A549 (cell line): ENCODE measurements at regions of chr19 and their contacts with region 1.

Region 1: DNA sequence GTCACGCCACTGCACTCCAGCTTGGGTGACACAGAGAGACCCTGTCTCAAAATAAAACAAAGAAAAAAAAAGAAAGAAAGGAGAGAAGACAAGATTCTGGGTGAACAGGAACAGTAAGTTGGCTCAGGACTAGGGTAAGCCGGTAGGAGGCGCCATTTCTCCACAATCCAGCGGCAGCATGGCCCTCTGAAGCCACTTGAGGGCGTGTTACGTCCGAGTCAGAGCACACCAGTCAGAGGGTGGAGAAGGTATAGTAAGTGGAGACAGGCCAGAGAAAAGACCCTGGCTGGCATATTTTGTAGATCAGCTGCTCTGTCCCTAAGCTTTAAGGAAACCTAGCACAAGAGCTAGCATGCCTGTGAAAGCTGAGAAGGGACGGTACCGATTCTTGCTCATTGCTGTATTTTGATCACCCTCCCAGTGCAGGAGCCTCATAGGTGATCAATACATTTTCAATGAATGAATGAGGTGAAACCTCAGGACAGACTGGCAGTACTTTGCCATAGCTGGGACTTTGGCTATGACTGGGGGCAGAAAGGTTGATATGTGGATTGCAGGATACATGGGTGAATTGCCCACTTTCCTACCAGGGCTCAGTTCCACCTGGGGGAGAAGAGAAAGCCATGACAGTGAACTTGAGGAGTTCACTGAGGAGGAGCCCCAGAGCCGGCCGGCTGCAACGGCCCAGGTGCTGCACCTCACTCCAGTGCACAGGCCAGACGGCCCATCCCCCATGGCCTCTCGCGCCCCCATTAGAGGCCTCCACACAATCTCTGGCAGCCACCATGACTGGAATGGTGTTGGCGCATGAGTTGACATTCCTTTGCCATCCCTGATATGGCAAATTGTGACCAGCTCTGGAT is 23.5 kb downstream of the POU2F2 start:
- DNase-seq: peak; percentile 95 to 98
- ATAC-seq: peak; percentile 81 to 91
- H3K4me3 ChIP-seq: no peak overlapping the region
- H3K27ac ChIP-seq: peak overlapping the region in 1 of 2 experiments; percentile 11; a peak in 1 of 6 replicates
- H3K4me1 ChIP-seq: peaks cover 18% of the 10 kb centered on the region
- CTCF ChIP-seq: peak; percentile 100
- EP300 ChIP-seq: no peak
- POLR2A ChIP-seq: no peak
- RAD21 ChIP-seq: peak; percentile 100

Region 2: GRCh38 chr19:41801792-41802211 is 307.0 kb before region 1 on chr19:
- CTCF ChIA-PET with region 1: no interaction called
- POLR2A ChIA-PET with region 1: no interaction called
- DNase-seq: no peak
- ATAC-seq: no peak
- H3K4me3 ChIP-seq: no peak overlapping the region
- H3K27ac ChIP-seq: no peak overlapping the region
- H3K4me1 ChIP-seq: 0 out of 3 replicates have a peak, but pooled peaks cover 5% of the 10 kb centered on the region
- CTCF ChIP-seq: no peak
- EP300 ChIP-seq: no peak
- POLR2A ChIP-seq: no peak
- RAD21 ChIP-seq: no peak

Region 3: DNA sequence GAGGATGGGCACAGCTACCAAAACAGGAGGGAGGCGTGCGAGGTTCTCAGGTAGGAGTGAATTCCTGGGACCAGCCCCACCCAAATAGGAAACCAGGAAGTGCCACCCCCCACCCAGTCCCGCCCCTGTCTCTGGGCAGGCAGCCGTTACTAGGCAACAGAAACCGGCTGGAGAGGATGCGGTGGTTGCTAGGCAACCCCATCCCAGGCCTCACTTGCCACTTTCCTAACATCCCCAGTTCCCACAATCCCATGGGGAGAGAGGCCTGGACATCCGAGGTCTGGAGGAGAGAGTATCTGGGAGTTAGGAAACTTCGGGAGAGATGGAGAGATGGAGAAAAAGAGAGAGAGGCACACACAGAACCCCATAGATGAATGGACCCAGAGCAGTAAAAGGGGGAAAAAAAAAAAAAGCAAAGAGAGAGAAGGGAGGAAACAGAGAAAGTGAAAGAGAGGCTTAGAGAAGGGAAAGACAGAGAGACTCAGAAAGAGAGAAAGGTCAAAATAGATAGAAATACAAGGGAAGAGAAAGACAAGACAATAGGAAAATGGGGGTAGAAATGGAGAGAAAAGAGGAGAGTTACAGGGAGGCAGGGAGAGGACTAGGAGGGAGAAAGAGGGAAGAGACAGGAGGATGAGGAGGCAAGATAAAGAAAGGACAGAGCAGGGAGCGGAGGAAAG is 42.5 kb before region 1 on chr19:
- CTCF ChIA-PET with region 1: interaction called, 11 read pairs
- POLR2A ChIA-PET with region 1: no interaction called
- DNase-seq: peak in 1 of 2 experiments; percentile 62
- ATAC-seq: no peak
- H3K4me3 ChIP-seq: no peak overlapping the region
- H3K27ac ChIP-seq: no peak overlapping the region
- H3K4me1 ChIP-seq: no peaks in the 10 kb centered on the region
- CTCF ChIP-seq: no peak
- EP300 ChIP-seq: no peak
- POLR2A ChIP-seq: no peak
- RAD21 ChIP-seq: no peak

Region 4: GRCh38 chr19:42132851-42133528 is 24.2 kb after region 1 on chr19:
- CTCF ChIA-PET with region 1: interaction called, 678 read pairs
- POLR2A ChIA-PET with region 1: no interaction called
- DNase-seq: peak; percentile 61 to 95
- ATAC-seq: peak; percentile 74 to 90
- H3K4me3 ChIP-seq: peak overlapping the region; percentile 35
- H3K27ac ChIP-seq: peak overlapping the region; percentile 15 to 53; a peak in 4 of 6 replicates
- H3K4me1 ChIP-seq: peaks cover 9% of the 10 kb centered on the region; the same call in 2 of the 3 replicates
- CTCF ChIP-seq: peak; percentile 100
- EP300 ChIP-seq: no peak
- POLR2A ChIP-seq: no peak
- RAD21 ChIP-seq: peak; percentile 99 to 100

Region 5: GRCh38 chr19:42191855-42192254 is 83.1 kb after region 1 on chr19:
- CTCF ChIA-PET with region 1: interaction called, 213 read pairs
- POLR2A ChIA-PET with region 1: interaction called, 7 read pairs
- DNase-seq: peak; percentile 87 to 94
- ATAC-seq: peak; percentile 60 to 74
- H3K4me3 ChIP-seq: no peak overlapping the region
- H3K27ac ChIP-seq: peak overlapping the region in 1 of 2 experiments; percentile 37; a peak in 1 of 6 replicates
- H3K4me1 ChIP-seq: peaks cover 14% of the 10 kb centered on the region
- CTCF ChIP-seq: no peak
- EP300 ChIP-seq: no peak
- POLR2A ChIP-seq: no peak
- RAD21 ChIP-seq: no peak

Region 6: DNA sequence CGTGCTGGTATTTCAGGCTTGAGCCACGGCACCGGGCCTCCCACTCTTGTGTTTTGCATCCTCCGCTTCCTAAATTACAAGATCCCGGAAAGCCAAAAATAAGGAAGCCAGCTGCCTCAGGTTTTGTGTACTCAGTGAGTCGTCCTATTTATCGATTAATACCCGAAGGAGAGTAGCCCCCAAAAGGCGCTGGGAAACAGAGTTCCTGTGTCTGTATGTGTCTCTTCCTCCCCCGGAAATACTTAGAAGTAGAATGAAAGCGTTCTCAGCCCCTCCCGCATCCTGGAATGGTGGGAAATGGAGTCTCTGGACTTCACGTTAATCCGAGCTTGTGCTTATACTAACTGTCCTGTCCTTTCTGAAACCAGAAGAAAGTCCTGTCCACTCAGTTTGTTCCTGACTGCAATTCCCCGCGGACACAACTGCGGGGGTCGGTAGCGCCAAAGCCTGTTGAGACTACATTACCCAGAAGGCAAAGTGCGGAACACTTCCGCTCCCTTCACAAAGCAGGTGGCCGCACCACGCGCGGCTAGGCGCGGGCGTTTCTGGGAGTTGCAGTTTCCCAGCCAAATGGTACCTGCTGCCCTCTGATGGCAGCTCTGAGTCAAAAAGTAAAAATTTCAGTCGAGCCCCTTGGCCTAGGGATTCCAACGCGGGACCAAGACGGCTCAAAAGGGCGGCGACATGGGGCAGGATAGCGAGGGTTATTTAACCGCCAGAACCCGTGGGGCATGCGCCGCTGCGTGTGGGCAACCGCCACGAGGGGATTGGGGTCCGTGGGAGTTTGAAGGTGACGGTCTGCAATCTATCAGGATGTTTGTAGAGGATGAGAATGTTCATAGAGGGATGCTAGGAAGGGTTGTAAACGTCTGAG is 135.8 kb after region 1 on chr19:
- CTCF ChIA-PET with region 1: interaction called, 268 read pairs
- POLR2A ChIA-PET with region 1: interaction called, 7 read pairs
- DNase-seq: peak; percentile 99
- ATAC-seq: peak; percentile 44 to 64
- H3K4me3 ChIP-seq: peak overlapping the region; percentile 65
- H3K27ac ChIP-seq: peak overlapping the region; percentile 87 to 90
- H3K4me1 ChIP-seq: peaks cover 60% of the 10 kb centered on the region
- CTCF ChIP-seq: peak; percentile 86
- EP300 ChIP-seq: no peak; a peak in 1 of 5 replicates
- POLR2A ChIP-seq: peak; percentile 18; the same call in 1 of the 2 replicates
- RAD21 ChIP-seq: peak; percentile 54 to 64

Region 7: GRCh38 chr19:42301656-42302203 is 193.0 kb after region 1 on chr19 and contains the start of gene PRR19:
- CTCF ChIA-PET with region 1: interaction called, 27 read pairs
- POLR2A ChIA-PET with region 1: interaction called, 3 read pairs
- DNase-seq: no peak
- ATAC-seq: peak; percentile 37 to 63
- H3K4me3 ChIP-seq: peak within 1 kb of the TSS; percentile 65
- H3K27ac ChIP-seq: peak within 1 kb of the TSS; percentile 74 to 85
- H3K4me1 ChIP-seq: peaks cover 19% of the 10 kb centered on the region
- CTCF ChIP-seq: no peak
- EP300 ChIP-seq: no peak
- POLR2A ChIP-seq: no peak
- RAD21 ChIP-seq: no peak
- polyA plus RNA-seq, gene PRR19: 1.1 and 1.3 TPM in 2 replicates

Region 8: DNA sequence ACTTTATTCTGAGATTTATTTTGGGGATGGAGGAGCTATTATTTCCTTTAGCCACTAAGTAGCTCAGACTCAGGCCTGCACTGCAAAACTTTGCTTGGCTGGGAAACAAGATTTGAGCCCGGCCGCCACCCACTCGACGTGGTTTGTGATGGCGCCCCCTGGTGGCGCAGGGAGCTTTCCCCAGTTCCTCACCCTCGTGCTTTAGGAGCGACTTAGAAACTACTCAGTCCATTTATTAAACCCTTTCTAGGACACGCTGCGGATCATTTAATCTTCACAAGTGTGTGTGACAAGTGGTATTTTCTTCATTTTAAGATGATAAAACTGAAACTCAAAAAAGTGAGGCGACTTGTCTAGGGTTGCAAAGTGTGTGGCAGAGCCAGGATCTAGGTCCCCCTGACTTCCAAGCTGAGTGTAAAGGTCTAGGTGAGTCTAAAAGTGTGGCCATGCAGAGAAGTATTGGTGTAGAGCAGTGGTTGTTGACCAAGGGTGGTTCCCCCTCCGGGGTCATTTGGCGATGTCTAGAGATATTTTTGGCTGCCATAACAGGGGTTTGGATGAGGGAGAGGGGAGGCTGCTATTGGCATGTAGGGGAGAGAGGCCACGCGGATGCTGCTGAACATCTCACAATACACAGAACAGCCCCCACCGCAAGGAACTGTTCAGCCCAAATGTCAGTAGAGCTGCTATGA is 331.7 kb after region 1 on chr19:
- CTCF ChIA-PET with region 1: interaction called, 20 read pairs
- POLR2A ChIA-PET with region 1: no interaction called
- DNase-seq: peak; percentile 87 to 95
- ATAC-seq: peak; percentile 73 to 85
- H3K4me3 ChIP-seq: no peak overlapping the region
- H3K27ac ChIP-seq: no peak overlapping the region
- H3K4me1 ChIP-seq: peaks cover 30% of the 10 kb centered on the region
- CTCF ChIP-seq: peak; percentile 99
- EP300 ChIP-seq: no peak
- POLR2A ChIP-seq: no peak
- RAD21 ChIP-seq: peak; percentile 38 to 50